A549 (cell line): ENCODE measurements at regions of chr10 and their contacts with region 1.

Region 1: GRCh38 chr10:126459878-126460481 is 71.7 kb upstream of the ADAM12 start:
- DNase-seq: peak; percentile 90 to 96
- ATAC-seq: peak; percentile 94 to 96
- H3K4me3 ChIP-seq: no peak overlapping the region
- H3K27ac ChIP-seq: peak overlapping the region; percentile 88 to 91
- H3K4me1 ChIP-seq: peaks cover 36% of the 10 kb centered on the region
- CTCF ChIP-seq: no peak
- EP300 ChIP-seq: peak; percentile 54 to 87; a peak in 3 of 5 replicates
- POLR2A ChIP-seq: no peak
- RAD21 ChIP-seq: peak; percentile 33 to 42; a peak in 3 of 5 replicates

Region 2: GRCh38 chr10:126242397-126243287 is 217.3 kb before region 1 on chr10:
- CTCF ChIA-PET with region 1: no interaction called
- POLR2A ChIA-PET with region 1: no interaction called
- DNase-seq: no peak
- ATAC-seq: no peak
- H3K4me3 ChIP-seq: no peak overlapping the region
- H3K27ac ChIP-seq: 0 out of 6 replicates have a peak overlapping the region, but pooled peaks of 1 of the 2 experiments have one; percentile 13
- H3K4me1 ChIP-seq: peaks cover 10% of the 10 kb centered on the region
- CTCF ChIP-seq: no peak
- EP300 ChIP-seq: no peak
- POLR2A ChIP-seq: no peak
- RAD21 ChIP-seq: no peak

Region 3: GRCh38 chr10:126387023-126387921 is 72.7 kb before region 1 on chr10:
- CTCF ChIA-PET with region 1: interaction called, 10 read pairs
- POLR2A ChIA-PET with region 1: no interaction called
- DNase-seq: peak; percentile 66 to 70
- ATAC-seq: peak; percentile 85 to 90
- H3K4me3 ChIP-seq: peak overlapping the region; percentile 61
- H3K27ac ChIP-seq: peak overlapping the region; percentile 63 to 93
- H3K4me1 ChIP-seq: no peaks in the 10 kb centered on the region
- CTCF ChIP-seq: peak; percentile 70
- EP300 ChIP-seq: no peak
- POLR2A ChIP-seq: no peak
- RAD21 ChIP-seq: peak; percentile 84 to 94